HCT116 (cell line): ENCODE measurements at regions of chr12 and their contacts with region 1.

Region 1: DNA sequence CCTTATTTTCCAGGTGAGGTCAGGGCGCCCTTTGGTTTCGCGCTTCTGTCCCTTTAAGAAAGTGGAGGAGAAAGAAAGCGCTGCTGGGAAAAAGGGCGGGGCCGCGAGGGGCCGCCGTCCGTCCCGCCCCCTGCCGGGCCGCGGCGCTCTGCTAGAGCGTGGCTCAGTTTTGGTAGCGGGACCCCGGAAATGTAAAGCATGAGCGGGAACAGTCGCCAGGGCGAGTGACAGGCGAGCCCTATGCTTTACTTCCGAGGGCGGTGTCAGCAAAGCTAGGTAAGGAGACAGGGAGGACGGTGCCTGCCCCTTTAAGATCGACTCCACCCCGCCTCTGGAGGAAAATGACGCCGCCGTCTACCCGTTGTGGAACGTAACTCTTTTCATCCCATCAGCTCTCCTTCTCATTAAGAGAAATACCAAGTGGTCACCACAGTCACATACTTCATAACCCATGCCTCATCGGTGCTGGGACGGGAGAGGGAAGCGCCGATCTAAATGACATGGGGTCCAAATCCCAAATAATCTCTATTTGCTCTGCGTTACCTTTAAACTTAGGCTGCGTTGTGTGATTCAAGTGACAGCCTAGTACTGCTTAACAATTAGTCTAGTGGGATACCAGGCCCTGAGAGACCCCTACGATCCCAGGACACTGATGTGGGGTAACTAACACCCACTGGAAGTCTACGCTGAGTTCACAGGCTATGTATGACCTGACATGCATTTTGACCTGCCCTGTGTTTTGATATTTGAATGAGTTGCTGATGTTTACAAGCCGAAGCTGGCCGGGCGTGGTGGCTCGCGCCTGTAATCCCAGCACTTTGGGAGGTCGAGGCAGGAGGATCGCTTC is at the start of gene ETFBKMT:
- DNase-seq: peak; percentile 93
- ATAC-seq: peak; percentile 98
- H3K4me3 ChIP-seq: peak within 1 kb of the TSS; percentile 53 to 82
- H3K27ac ChIP-seq: peak within 1 kb of the TSS; percentile 75
- H3K4me1 ChIP-seq: peaks cover 10 to 15% of the 10 kb centered on the region in 2 experiments; a peak in 3 of 4 replicates
- H3K27me3 ChIP-seq: no peaks in the 10 kb centered on the region
- CTCF ChIP-seq: peak in 2 of 3 experiments; percentile 21 to 38; a peak in 2 of 6 replicates
- POLR2A ChIP-seq: peak; percentile 73
- RAD21 ChIP-seq: peak; percentile 34
- total RNA-seq, gene ETFBKMT: 1.7 TPM

Region 2: GRCh38 chr12:30970559-30971197 is 688.6 kb before region 1 on chr12:
- CTCF ChIA-PET with region 1: no interaction called
- POLR2A ChIA-PET with region 1: no interaction called
- RAD21 ChIA-PET with region 1: no interaction called
- intact Hi-C with region 1: no loop called
- DNase-seq: no peak
- ATAC-seq: no peak
- H3K4me3 ChIP-seq: no peak overlapping the region
- H3K27ac ChIP-seq: no peak overlapping the region
- H3K4me1 ChIP-seq: no peaks in the 10 kb centered on the region
- H3K27me3 ChIP-seq: peaks cover 32% of the 10 kb centered on the region; the same call in 1 of the 2 replicates
- CTCF ChIP-seq: no peak
- POLR2A ChIP-seq: no peak
- RAD21 ChIP-seq: no peak

Region 3: DNA sequence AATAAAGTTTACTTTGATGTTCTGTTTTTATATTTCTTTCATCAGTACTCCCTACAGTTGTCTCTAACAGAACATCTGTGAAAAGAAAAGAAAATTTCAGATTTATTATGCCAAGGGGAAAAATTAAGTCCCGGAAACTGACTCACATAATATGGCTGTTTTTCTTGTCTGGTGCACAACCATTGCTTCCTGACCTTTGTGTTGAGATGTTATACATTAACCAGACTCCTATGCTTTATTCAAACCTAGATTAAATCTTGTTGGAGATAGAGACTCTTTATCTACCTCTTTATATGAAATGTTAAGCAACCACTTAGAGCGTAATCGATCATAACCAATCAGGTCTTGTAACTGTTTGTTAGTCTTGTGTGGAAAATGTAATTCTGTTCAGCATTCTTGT is 409.8 kb after region 1 on chr12:
- CTCF ChIA-PET with region 1: no interaction called
- POLR2A ChIA-PET with region 1: no interaction called
- RAD21 ChIA-PET with region 1: no interaction called
- intact Hi-C with region 1: loop called (anchors 10 kb)
- DNase-seq: no peak
- ATAC-seq: no peak
- H3K4me3 ChIP-seq: no peak overlapping the region
- H3K27ac ChIP-seq: no peak overlapping the region
- H3K4me1 ChIP-seq: no peaks in the 10 kb centered on the region
- H3K27me3 ChIP-seq: no peaks in the 10 kb centered on the region
- CTCF ChIP-seq: no peak
- POLR2A ChIP-seq: no peak
- RAD21 ChIP-seq: no peak

Region 4: GRCh38 chr12:32106517-32107358 is 447.4 kb after region 1 on chr12 and contains the start of gene BICD1:
- CTCF ChIA-PET with region 1: no interaction called
- POLR2A ChIA-PET with region 1: no interaction called
- RAD21 ChIA-PET with region 1: no interaction called
- intact Hi-C with region 1: loop called (anchors 5 kb)
- DNase-seq: peak; percentile 56
- ATAC-seq: peak; percentile 90
- H3K4me3 ChIP-seq: peak within 1 kb of the TSS; percentile 81 to 95
- H3K27ac ChIP-seq: peak within 1 kb of the TSS; percentile 87
- H3K4me1 ChIP-seq: peaks cover 14 to 22% of the 10 kb centered on the region in 2 experiments
- H3K27me3 ChIP-seq: no peaks in the 10 kb centered on the region
- CTCF ChIP-seq: peak; percentile 25 to 37 (median 34); a peak in 3 of 6 replicates
- POLR2A ChIP-seq: peak; percentile 80
- RAD21 ChIP-seq: peak; percentile 27
- total RNA-seq, gene BICD1: 32.5 TPM

Region 5: GRCh38 chr12:32679091-32679919 is 1020.0 kb after region 1 on chr12 and contains the start of gene DNM1L:
- CTCF ChIA-PET with region 1: no interaction called
- POLR2A ChIA-PET with region 1: no interaction called
- RAD21 ChIA-PET with region 1: no interaction called
- intact Hi-C with region 1: loop called (anchors 5 kb)
- DNase-seq: peak; percentile 92
- ATAC-seq: peak; percentile 97
- H3K4me3 ChIP-seq: peak within 1 kb of the TSS; percentile 70 to 95
- H3K27ac ChIP-seq: peak within 1 kb of the TSS; percentile 88
- H3K4me1 ChIP-seq: peaks cover 15 to 28% of the 10 kb centered on the region in 2 experiments
- H3K27me3 ChIP-seq: no peaks in the 10 kb centered on the region
- CTCF ChIP-seq: peak in 1 of 3 experiments; percentile 7; a peak in 1 of 6 replicates
- POLR2A ChIP-seq: peak; percentile 83
- RAD21 ChIP-seq: no peak
- total RNA-seq, gene DNM1L: 69.7 TPM

Region 6: DNA sequence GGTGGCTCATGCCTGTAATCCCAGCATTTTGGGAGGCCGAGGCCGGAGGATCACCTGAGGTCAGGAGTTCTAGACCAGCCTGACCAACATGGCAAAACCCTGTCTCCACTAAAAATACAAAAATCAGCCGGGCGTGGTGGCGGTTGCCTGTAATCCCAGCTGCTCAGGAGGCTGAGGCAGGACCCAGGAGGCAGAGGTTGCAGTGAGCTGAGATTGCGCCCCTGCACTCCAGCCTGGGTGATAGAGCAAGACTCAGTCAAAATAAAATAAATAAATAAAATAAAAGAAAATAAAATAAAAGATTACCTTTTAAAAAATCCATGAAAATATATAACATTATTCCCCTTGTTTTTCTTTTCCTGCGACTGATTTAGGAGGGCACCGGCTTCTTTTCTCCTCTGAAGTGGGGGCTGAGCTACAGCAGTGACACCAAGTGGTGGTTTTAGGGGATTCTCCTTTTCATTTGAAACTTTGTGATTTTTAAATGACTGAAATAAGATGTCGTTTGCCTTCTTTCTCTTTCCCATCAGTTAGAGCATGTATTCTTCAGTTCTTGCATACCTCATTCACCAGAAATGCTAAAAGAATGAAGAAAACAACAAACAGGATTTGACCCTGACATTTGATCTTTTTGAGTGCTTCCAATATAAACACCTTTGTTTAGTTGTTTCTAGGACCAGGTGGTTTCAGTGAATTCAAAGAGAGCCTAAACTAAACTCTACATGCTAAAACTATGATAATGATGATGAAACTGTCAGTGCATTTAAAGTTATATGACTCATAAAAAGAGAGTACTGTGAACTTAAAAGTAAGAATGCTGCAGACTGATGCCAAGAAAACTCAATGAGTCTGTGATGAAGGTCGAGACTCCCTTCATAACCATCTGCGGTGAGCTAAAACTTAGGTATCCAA is 1259.8 kb after region 1 on chr12:
- CTCF ChIA-PET with region 1: no interaction called
- POLR2A ChIA-PET with region 1: no interaction called
- RAD21 ChIA-PET with region 1: no interaction called
- intact Hi-C with region 1: loop called (anchors 10 kb)
- DNase-seq: no peak
- ATAC-seq: peak; percentile 80
- H3K4me3 ChIP-seq: no peak overlapping the region
- H3K27ac ChIP-seq: no peak overlapping the region
- H3K4me1 ChIP-seq: peaks cover 0 to 16% of the 10 kb centered on the region in 2 experiments; a peak in 2 of 4 replicates
- H3K27me3 ChIP-seq: no peaks in the 10 kb centered on the region
- CTCF ChIP-seq: peak; percentile 58 to 61 (median 59); a peak in 5 of 6 replicates
- POLR2A ChIP-seq: no peak
- RAD21 ChIP-seq: peak; percentile 80